HCT116 (cell line): ENCODE measurements at regions of chr7 and their contacts with region 1.

Region 1: GRCh38 chr7:636396-636795 is 90.1 kb upstream of the DNAAF5 start:
- DNase-seq: peak; percentile 65
- ATAC-seq: peak; percentile 77
- H3K4me3 ChIP-seq: peak overlapping the region; percentile 44 to 54
- H3K27ac ChIP-seq: peak overlapping the region; percentile 67
- H3K4me1 ChIP-seq: peaks cover 21 to 40% of the 10 kb centered on the region in 2 experiments
- H3K27me3 ChIP-seq: no peaks in the 10 kb centered on the region
- CTCF ChIP-seq: peak in 2 of 3 experiments; percentile 70 to 80; a peak in 4 of 6 replicates
- POLR2A ChIP-seq: no peak
- RAD21 ChIP-seq: no peak

Region 2: DNA sequence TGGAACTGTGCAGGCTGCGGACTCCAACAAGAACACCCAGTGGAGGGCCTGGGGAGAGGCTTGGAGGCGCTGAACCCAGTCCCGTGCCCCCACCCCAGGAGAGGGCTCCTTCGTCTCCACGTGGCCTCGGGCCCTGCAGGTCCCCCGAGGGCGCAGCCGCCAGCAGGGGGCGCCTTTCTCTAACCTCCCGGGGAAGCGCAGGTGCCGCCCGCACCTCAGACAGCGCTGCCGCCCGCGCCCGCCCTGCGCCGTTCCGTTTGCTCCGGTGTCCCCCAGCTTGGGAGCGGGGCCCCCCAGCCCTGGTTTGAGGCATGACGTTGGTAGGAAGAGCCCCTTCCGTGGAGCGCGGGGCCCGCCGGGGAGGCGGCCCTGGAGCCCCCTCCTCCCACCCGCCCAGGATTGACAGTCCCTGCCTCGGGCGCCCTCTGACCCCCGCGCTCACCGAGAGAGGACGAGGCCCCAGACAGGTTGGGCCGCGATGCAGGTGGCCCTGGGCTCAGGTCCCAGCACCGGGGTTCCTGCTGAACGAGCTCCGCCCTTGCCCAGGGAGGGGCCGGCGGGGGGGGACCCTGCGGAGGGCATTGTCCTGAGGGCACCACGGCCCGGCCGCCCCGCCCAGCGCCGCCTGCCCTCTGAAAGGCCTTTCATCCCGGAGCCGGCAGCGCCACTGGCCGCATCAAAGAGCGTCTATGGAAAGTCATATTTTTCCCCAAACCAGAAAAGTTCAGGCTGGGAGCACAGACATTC is 303.6 kb before region 1 on chr7:
- CTCF ChIA-PET with region 1: interaction called, 7 read pairs
- POLR2A ChIA-PET with region 1: no interaction called
- RAD21 ChIA-PET with region 1: interaction called, 3 to 4 read pairs
- intact Hi-C with region 1: loop called (anchors 1 kb)
- DNase-seq: peak; percentile 51
- ATAC-seq: peak; percentile 99
- H3K4me3 ChIP-seq: peak overlapping the region; percentile 31 to 51
- H3K27ac ChIP-seq: no peak overlapping the region
- H3K4me1 ChIP-seq: peaks cover 2 to 8% of the 10 kb centered on the region in 2 experiments; a peak in 2 of 4 replicates
- H3K27me3 ChIP-seq: no peaks in the 10 kb centered on the region; the same call in 1 of the 2 replicates
- CTCF ChIP-seq: peak; percentile 80 to 91 (median 87)
- POLR2A ChIP-seq: no peak
- RAD21 ChIP-seq: peak; percentile 96

Region 3: DNA sequence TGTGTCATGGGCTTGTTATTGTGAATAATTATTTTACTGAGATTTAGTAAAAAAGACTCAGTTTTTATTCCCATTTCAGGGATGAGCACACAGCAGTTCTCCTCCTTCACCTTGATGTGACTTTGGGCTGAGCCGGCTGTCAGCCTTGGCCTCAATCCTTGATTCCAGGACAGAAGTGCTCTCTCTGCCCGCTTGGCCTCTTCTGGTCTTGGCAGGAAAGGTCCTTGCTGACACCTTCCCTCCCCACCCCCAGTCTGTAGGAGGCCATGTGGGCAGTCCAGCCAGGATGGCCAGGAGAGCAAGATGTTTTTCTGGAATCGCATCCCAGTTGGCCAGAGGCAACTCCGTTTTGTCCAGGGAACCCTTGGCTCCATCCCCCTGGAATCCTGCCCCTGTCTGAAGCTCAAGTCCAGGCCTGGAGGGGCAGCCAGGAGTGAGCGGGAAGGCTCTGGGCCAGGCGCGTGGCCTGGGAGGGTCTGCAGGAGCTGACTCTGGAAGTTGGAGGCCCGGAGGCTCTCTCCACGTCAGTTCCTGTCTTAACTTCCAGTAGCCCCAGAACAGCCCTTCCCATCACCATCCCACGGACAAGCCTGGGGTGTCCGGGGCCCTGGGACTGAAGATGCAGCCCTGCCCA is 217.6 kb before region 1 on chr7:
- CTCF ChIA-PET with region 1: no interaction called
- POLR2A ChIA-PET with region 1: no interaction called
- RAD21 ChIA-PET with region 1: no interaction called
- intact Hi-C with region 1: no loop called
- DNase-seq: no peak
- ATAC-seq: no peak
- H3K4me3 ChIP-seq: no peak overlapping the region
- H3K27ac ChIP-seq: no peak overlapping the region
- H3K4me1 ChIP-seq: no peaks in the 10 kb centered on the region
- H3K27me3 ChIP-seq: no peaks in the 10 kb centered on the region
- CTCF ChIP-seq: no peak
- POLR2A ChIP-seq: no peak
- RAD21 ChIP-seq: no peak

Region 4: GRCh38 chr7:518630-519483 is 117.5 kb before region 1 on chr7:
- CTCF ChIA-PET with region 1: no interaction called
- POLR2A ChIA-PET with region 1: interaction called, 4 read pairs
- RAD21 ChIA-PET with region 1: no interaction called
- intact Hi-C with region 1: loop called (anchors 2 kb)
- DNase-seq: no peak
- ATAC-seq: peak; percentile 61
- H3K4me3 ChIP-seq: peak overlapping the region; percentile 52 to 94
- H3K27ac ChIP-seq: peak overlapping the region; percentile 83
- H3K4me1 ChIP-seq: peaks cover 25 to 56% of the 10 kb centered on the region in 2 experiments
- H3K27me3 ChIP-seq: no peaks in the 10 kb centered on the region
- CTCF ChIP-seq: no peak
- POLR2A ChIP-seq: no peak
- RAD21 ChIP-seq: no peak

Region 5: GRCh38 chr7:537911-538634 is 98.3 kb before region 1 on chr7:
- CTCF ChIA-PET with region 1: no interaction called
- POLR2A ChIA-PET with region 1: interaction called, 4 read pairs
- RAD21 ChIA-PET with region 1: no interaction called
- intact Hi-C with region 1: loop called (anchors 5 kb)
- DNase-seq: peak; percentile 83
- ATAC-seq: peak; percentile 75
- H3K4me3 ChIP-seq: peak overlapping the region; percentile 51 to 61
- H3K27ac ChIP-seq: peak overlapping the region; percentile 100
- H3K4me1 ChIP-seq: peaks cover 37 to 56% of the 10 kb centered on the region in 2 experiments
- H3K27me3 ChIP-seq: no peaks in the 10 kb centered on the region
- CTCF ChIP-seq: no peak
- POLR2A ChIP-seq: no peak
- RAD21 ChIP-seq: no peak

Region 6: GRCh38 chr7:593324-594115 is 42.9 kb before region 1 on chr7:
- CTCF ChIA-PET with region 1: no interaction called
- POLR2A ChIA-PET with region 1: no interaction called
- RAD21 ChIA-PET with region 1: no interaction called
- intact Hi-C with region 1: no loop called
- DNase-seq: no peak
- ATAC-seq: no peak
- H3K4me3 ChIP-seq: no peak overlapping the region
- H3K27ac ChIP-seq: no peak overlapping the region
- H3K4me1 ChIP-seq: no peaks in the 10 kb centered on the region
- H3K27me3 ChIP-seq: no peaks in the 10 kb centered on the region
- CTCF ChIP-seq: no peak
- POLR2A ChIP-seq: no peak
- RAD21 ChIP-seq: no peak

Region 7: GRCh38 chr7:726084-726853 is 89.9 kb after region 1 on chr7 and contains the start of gene DNAAF5:
- CTCF ChIA-PET with region 1: no interaction called
- POLR2A ChIA-PET with region 1: interaction called, 3 read pairs
- RAD21 ChIA-PET with region 1: no interaction called
- intact Hi-C with region 1: loop called (anchors 2 kb)
- DNase-seq: peak; percentile 77
- ATAC-seq: peak; percentile 73
- H3K4me3 ChIP-seq: peak within 1 kb of the TSS; percentile 58 to 67
- H3K27ac ChIP-seq: peak within 1 kb of the TSS; percentile 96
- H3K4me1 ChIP-seq: peaks cover 9 to 25% of the 10 kb centered on the region in 2 experiments
- H3K27me3 ChIP-seq: no peaks in the 10 kb centered on the region
- CTCF ChIP-seq: no peak
- POLR2A ChIP-seq: peak; percentile 42
- RAD21 ChIP-seq: no peak
- total RNA-seq, gene DNAAF5: 69.4 TPM